ENCODE measurements at regions of chr4 and their contacts with region 1.

Region 1: DNA sequence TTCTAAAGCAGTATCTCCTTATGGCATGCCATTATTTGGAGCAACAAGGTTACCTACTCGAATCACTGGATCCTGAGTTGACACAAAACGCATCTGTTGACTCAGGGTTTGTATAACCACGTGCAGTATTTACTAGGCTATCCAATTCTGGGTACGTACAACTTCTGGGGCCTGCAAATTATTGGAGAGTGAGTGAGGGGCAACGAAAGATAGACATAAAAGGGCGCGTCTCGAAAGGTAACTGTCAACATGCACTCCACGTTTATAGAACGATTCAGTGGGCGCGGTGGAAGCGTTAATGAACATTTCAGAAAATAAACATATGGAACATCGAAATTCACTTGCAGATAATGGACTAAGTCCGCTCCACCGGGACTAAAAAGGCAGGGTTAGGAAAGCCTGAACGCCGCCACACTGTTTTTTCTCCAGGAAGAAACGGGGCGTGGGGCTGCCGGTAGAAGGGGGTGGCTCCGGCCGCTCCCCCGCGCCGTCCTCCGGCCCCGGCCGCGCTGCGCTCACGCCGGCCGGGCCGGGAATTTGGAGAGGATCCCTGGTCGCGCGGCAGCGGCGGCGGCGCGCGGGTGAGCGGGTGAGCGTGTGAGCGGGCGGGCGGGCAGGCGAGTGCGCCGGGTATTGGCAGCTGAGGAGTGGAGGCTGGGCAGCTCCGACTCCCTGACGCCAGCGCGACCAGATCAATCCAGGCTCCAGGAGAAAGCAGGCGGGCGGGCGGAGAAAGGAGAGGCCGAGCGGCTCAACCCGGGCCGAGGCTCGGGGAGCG is at the start of gene SMAD1:
- DNase-seq: peak; percentile 87 to 95 (median 95)
- ATAC-seq: peak; percentile 97 to 98
- H3K4me3 ChIP-seq: peak within 1 kb of the TSS; percentile 85
- H3K27ac ChIP-seq: peak within 1 kb of the TSS; percentile 99
- H3K4me1 ChIP-seq: no peaks in the 10 kb centered on the region
- H3K27me3 ChIP-seq: no peaks in the 10 kb centered on the region
- total RNA-seq, gene SMAD1: 8.3 to 12.0 (median 9.5) TPM

Region 2: GRCh38 chr4:145520172-145520571 is 38.8 kb after region 1 on chr4:
- intact Hi-C with region 1: no loop called
- DNase-seq: no peak
- ATAC-seq: no peak
- H3K4me3 ChIP-seq: no peak overlapping the region
- H3K27ac ChIP-seq: no peak overlapping the region
- H3K4me1 ChIP-seq: no peaks in the 10 kb centered on the region
- H3K27me3 ChIP-seq: no peaks in the 10 kb centered on the region

Region 3: GRCh38 chr4:145531223-145531622 is 49.9 kb after region 1 on chr4:
- intact Hi-C with region 1: loop called in 1 of 4 experiments (anchors 10 kb)
- DNase-seq: peak in 2 of 3 donors; percentile 35 to 43
- ATAC-seq: peak; percentile 43 to 55
- H3K4me3 ChIP-seq: no peak overlapping the region
- H3K27ac ChIP-seq: no peak overlapping the region
- H3K4me1 ChIP-seq: peaks cover 7% of the 10 kb centered on the region
- H3K27me3 ChIP-seq: no peaks in the 10 kb centered on the region

Measured in right cardiac atrium (tissue), 5 donors.